ENCODE measurements at regions of chr16 and their contacts with region 1.

Region 1: GRCh38 chr16:21584817-21585216 is 14.6 kb upstream of the METTL9 start:
- DNase-seq: no peak
- H3K4me3 ChIP-seq: no peak overlapping the region
- H3K27ac ChIP-seq: no peak overlapping the region
- H3K4me1 ChIP-seq: no peaks in the 10 kb centered on the region
- H3K27me3 ChIP-seq: peaks cover 0 to 3% of the 10 kb centered on the region in 2 experiments
- CTCF ChIP-seq: no peak
- POLR2A ChIP-seq: no peak

Region 2: DNA sequence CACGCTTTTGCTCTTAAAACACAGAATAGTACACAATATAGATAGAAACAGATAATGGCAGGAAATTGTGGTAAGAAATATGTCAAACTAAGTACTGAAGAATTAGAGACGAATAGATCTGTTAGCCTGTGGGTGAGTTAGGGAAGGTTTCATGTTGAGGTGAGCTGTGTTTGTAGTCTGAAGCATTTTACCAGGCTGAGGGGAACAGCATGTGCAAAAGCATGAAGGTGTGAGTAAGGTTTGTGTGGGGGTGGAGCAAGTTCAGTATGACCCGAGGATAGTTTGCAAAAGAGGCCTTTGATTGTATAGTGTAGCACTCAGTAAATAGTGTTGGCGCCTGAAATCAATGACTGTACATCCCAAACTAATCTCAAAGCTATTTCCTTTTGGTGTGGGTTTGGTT is 53.8 kb after region 1 on chr16:
- CTCF ChIA-PET with region 1: interaction called, 72 read pairs
- POLR2A ChIA-PET with region 1: no interaction called
- dilution Hi-C with region 1: no loop called
- intact Hi-C with region 1: loop called (anchors 1 kb)
- DNase-seq: no peak
- H3K4me3 ChIP-seq: no peak overlapping the region
- H3K27ac ChIP-seq: no peak overlapping the region
- H3K4me1 ChIP-seq: peaks cover 9% of the 10 kb centered on the region
- H3K27me3 ChIP-seq: no peaks in the 10 kb centered on the region
- CTCF ChIP-seq: no peak
- POLR2A ChIP-seq: no peak

Region 3: DNA sequence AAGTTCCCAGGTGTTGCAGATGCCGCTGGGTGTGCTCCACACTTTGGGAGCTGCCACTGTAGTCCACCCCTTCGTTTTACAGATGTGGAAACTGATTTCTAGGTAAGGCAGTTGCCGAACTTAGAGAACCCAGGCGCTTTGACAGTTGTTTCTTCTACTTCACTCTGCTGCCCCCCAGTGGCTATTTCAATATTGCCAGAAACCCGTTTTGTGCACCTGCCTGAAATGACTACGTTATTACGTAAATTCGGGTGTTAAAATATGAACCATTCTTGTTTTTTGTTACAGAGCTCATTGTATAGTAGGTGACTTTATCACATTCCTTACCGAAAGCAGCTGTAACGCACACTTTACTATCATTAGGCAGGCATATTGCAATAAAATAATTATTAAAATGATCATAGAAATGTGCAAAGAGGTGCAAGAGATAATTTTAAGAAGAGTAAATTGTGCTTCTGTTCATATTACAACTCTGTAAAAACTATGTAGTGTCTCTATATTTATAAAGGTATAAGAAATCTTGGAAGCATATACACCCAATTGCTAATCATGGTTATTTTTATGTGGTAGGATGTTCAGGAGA is 123.8 kb after region 1 on chr16:
- CTCF ChIA-PET with region 1: interaction called, 59 read pairs
- POLR2A ChIA-PET with region 1: no interaction called
- dilution Hi-C with region 1: no loop called
- intact Hi-C with region 1: loop called (anchors 1 kb)
- DNase-seq: peak; percentile 74
- H3K4me3 ChIP-seq: no peak overlapping the region
- H3K27ac ChIP-seq: no peak overlapping the region
- H3K4me1 ChIP-seq: no peaks in the 10 kb centered on the region
- H3K27me3 ChIP-seq: no peaks in the 10 kb centered on the region
- CTCF ChIP-seq: peak; percentile 73
- POLR2A ChIP-seq: no peak

Region 4: GRCh38 chr16:22694887-22695382 is 1110.1 kb after region 1 on chr16:
- CTCF ChIA-PET with region 1: interaction called, 17 read pairs
- POLR2A ChIA-PET with region 1: no interaction called
- dilution Hi-C with region 1: no loop called
- intact Hi-C with region 1: no loop called
- DNase-seq: no peak
- H3K4me3 ChIP-seq: no peak overlapping the region
- H3K27ac ChIP-seq: no peak overlapping the region
- H3K4me1 ChIP-seq: no peaks in the 10 kb centered on the region
- H3K27me3 ChIP-seq: peaks cover 0 to 2% of the 10 kb centered on the region in 2 experiments
- CTCF ChIP-seq: no peak
- POLR2A ChIP-seq: no peak